A673 (cell line): ENCODE measurements at regions of chr13 and their contacts with region 1.

Region 1: GRCh38 chr13:56271686-56272085 is 869.0 kb upstream of the PRR20A start:
- DNase-seq: no peak
- H3K4me3 ChIP-seq: no peak overlapping the region
- H3K27ac ChIP-seq: no peak overlapping the region
- H3K4me1 ChIP-seq: no peaks in the 10 kb centered on the region
- H3K27me3 ChIP-seq: no peaks in the 10 kb centered on the region
- CTCF ChIP-seq: no peak

Region 2: GRCh38 chr13:55761986-55762385 is 509.7 kb before region 1 on chr13:
- CTCF ChIA-PET with region 1: no interaction called
- POLR2A ChIA-PET with region 1: no interaction called
- intact Hi-C with region 1: loop called (anchors 5 kb)
- DNase-seq: no peak
- H3K4me3 ChIP-seq: no peak overlapping the region
- H3K27ac ChIP-seq: no peak overlapping the region
- H3K4me1 ChIP-seq: no peaks in the 10 kb centered on the region
- H3K27me3 ChIP-seq: no peaks in the 10 kb centered on the region
- CTCF ChIP-seq: no peak

Region 3: DNA sequence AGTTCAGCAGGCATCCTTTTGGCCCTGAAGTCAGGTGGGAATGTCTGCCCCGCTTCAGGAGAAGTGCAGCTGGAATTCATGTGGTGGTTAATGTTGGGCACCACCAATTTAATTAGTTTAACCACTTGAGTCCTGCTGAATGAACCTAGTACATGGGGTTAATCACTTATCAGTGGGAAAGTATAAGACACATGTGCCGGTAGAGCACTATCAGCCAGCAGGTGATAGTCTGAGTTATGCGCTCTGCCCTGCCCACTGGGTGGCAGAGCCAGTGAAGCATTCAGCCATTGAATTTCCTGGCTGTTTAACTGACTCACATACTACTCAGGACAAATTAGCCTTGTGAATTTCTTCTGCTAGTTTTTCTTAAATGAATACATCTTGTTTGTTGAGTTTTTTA is 79.4 kb after region 1 on chr13:
- CTCF ChIA-PET with region 1: no interaction called
- POLR2A ChIA-PET with region 1: no interaction called
- intact Hi-C with region 1: no loop called
- DNase-seq: peak; percentile 5
- H3K4me3 ChIP-seq: no peak overlapping the region
- H3K27ac ChIP-seq: no peak overlapping the region
- H3K4me1 ChIP-seq: no peaks in the 10 kb centered on the region
- H3K27me3 ChIP-seq: no peaks in the 10 kb centered on the region
- CTCF ChIP-seq: no peak

Region 4: GRCh38 chr13:57114945-57115344 is 843.3 kb after region 1 on chr13:
- CTCF ChIA-PET with region 1: no interaction called
- POLR2A ChIA-PET with region 1: no interaction called
- intact Hi-C with region 1: loop called (anchors 2 kb)
- DNase-seq: peak; percentile 54
- H3K4me3 ChIP-seq: no peak overlapping the region
- H3K27ac ChIP-seq: peak overlapping the region; percentile 51
- H3K4me1 ChIP-seq: no peaks in the 10 kb centered on the region
- H3K27me3 ChIP-seq: no peaks in the 10 kb centered on the region
- CTCF ChIP-seq: no peak

Region 5: GRCh38 chr13:57874530-57874929 is 1602.8 kb after region 1 on chr13:
- CTCF ChIA-PET with region 1: no interaction called
- POLR2A ChIA-PET with region 1: no interaction called
- intact Hi-C with region 1: no loop called
- DNase-seq: no peak
- H3K4me3 ChIP-seq: no peak overlapping the region
- H3K27ac ChIP-seq: no peak overlapping the region
- H3K4me1 ChIP-seq: peaks cover 5% of the 10 kb centered on the region
- H3K27me3 ChIP-seq: no peaks in the 10 kb centered on the region
- CTCF ChIP-seq: no peak